Sigmoid colon (tissue), 7 donors: ENCODE measurements at regions of chr9 and their contacts with region 1.

Region 1: GRCh38 chr9:86637515-86637914 is 283.3 kb upstream of the TUT7 start:
- DNase-seq: no peak
- H3K4me3 ChIP-seq: no peak overlapping the region
- H3K27ac ChIP-seq: no peak overlapping the region
- H3K4me1 ChIP-seq: peaks cover 0 to 29% (median 18%) of the 10 kb centered on the region in 4 donors
- H3K27me3 ChIP-seq: no peaks in the 10 kb centered on the region
- CTCF ChIP-seq: peak in 3 of 4 experiments; percentile 9 to 31 (median 17)
- EP300 ChIP-seq: no peak
- POLR2A ChIP-seq: no peak

Region 2: GRCh38 chr9:86494644-86495111 is 142.8 kb before region 1 on chr9:
- intact Hi-C with region 1: loop called (anchors 5 kb)
- DNase-seq: no peak
- H3K4me3 ChIP-seq: no peak overlapping the region
- H3K27ac ChIP-seq: no peak overlapping the region
- H3K4me1 ChIP-seq: peaks cover 0 to 10% (median 7%) of the 10 kb centered on the region in 4 donors
- H3K27me3 ChIP-seq: no peaks in the 10 kb centered on the region
- CTCF ChIP-seq: no peak
- EP300 ChIP-seq: no peak
- POLR2A ChIP-seq: no peak

Region 3: GRCh38 chr9:86674487-86674886 is 37.0 kb after region 1 on chr9:
- intact Hi-C with region 1: no loop called
- DNase-seq: no peak
- H3K4me3 ChIP-seq: no peak overlapping the region
- H3K27ac ChIP-seq: no peak overlapping the region
- H3K4me1 ChIP-seq: peaks cover 0 to 13% (median 5%) of the 10 kb centered on the region in 4 donors
- H3K27me3 ChIP-seq: no peaks in the 10 kb centered on the region
- CTCF ChIP-seq: no peak
- EP300 ChIP-seq: no peak
- POLR2A ChIP-seq: no peak